ENCODE measurements at regions of chr10 and their contacts with region 1.

Region 1: DNA sequence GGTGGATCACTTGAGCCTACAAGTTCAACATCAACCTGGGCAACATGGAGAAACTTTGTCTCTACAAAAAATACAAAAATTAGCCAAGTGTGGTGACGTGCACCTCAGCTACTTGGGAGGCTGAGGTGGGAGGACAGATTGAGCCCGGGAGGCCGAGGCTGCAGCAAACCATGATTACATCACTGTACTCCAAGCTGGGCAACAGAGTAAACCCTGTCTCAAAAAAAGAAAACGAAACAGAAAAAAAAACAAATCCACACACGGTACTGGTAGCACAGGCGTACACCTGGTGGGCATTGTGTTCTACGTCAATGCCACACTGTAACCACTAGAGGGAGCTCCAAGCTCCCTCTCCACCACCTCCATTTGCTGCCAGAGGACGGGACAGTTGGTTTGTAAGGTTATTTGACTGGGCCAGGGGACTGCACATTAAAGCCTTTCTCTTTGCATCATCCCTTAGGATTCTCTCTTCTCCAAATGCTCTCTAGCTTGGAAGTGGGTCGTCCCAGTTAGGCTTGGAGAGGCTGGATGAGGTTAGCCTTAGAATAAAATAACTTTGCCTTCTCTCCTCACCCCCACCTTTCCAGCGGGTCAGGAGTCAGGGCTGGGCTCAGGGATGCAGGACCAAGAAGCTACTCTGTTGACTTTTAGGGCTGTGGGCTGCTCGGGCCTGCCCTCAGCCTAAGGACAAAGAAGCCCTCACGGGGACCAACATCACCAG is 130.8 kb downstream of the SORBS1 start:
- DNase-seq: peak in 1 of 10 donors; percentile 67
- H3K4me3 ChIP-seq: no peak overlapping the region
- H3K27ac ChIP-seq: peak overlapping the region in 42 of 59 donors; percentile 1 to 87 (median 60)
- H3K27me3 ChIP-seq: peaks cover 0 to 7% (median 0%) of the 10 kb centered on the region in 45 donors
- CTCF ChIP-seq: peak; percentile 89 to 99 (median 96)

Region 2: GRCh38 chr10:95374597-95375209 is 55.7 kb before region 1 on chr10:
- intact Hi-C with region 1: loop called in 1 of 2 experiments (anchors 5 kb)
- DNase-seq: peak; percentile 62 to 89 (median 80)
- H3K4me3 ChIP-seq: no peak overlapping the region
- H3K27ac ChIP-seq: peak overlapping the region in 36 of 59 donors; percentile 1 to 84 (median 44)
- H3K27me3 ChIP-seq: no peaks in the 10 kb centered on the region
- CTCF ChIP-seq: peak; percentile 81 to 99 (median 96)

Region 3: GRCh38 chr10:95391581-95392216 is 38.7 kb before region 1 on chr10:
- intact Hi-C with region 1: no loop called
- DNase-seq: peak in 1 of 10 donors; percentile 56
- H3K4me3 ChIP-seq: no peak overlapping the region
- H3K27ac ChIP-seq: peak overlapping the region in 56 of 59 donors; percentile 2 to 92 (median 74)
- H3K27me3 ChIP-seq: no peaks in the 10 kb centered on the region
- CTCF ChIP-seq: peak in 11 of 56 donors; percentile 9 to 33 (median 16)

Region 4: DNA sequence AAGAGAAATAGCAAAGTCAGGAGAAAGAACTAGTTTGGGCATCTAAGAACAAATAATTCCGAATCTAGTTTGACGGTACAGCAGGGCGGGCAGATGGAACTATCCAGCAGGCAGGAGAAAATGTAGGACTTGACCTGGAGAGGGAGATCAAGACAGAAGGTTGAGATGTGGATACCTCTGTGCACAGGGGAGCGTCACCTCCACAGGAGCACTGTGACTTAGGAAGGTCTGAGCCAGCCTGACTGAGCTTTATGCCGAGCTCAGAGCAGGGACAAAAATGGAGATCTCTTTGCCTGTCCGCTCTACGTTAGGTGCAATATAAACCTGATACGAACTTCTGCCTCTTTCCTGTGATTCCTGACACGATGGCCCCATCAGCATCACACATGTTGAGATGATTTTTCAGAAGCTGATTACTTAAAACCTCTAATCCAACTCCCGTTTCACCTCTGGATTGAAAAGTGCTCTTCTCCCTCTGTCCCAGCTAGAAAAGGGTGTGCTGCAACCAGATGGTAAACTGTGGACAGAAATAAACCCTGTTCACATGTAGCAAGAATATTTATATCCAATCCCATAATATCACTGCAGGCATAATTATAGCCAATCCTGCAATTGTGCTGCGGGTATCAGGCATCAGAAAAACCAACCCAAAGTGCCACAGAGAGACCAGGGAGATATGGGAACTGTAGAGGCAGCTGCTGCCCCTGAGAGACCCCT is 144.4 kb after region 1 on chr10:
- intact Hi-C with region 1: no loop called
- DNase-seq: no peak
- H3K4me3 ChIP-seq: peak overlapping the region in 2 of 59 donors; percentile 3 to 5
- H3K27ac ChIP-seq: peak overlapping the region in 56 of 59 donors; percentile 2 to 88 (median 66)
- H3K27me3 ChIP-seq: peaks cover 0 to 3% (median 0%) of the 10 kb centered on the region in 45 donors
- CTCF ChIP-seq: no peak